AG04449 (cell line): ENCODE measurements at regions of chr21 and their contacts with region 1.

Region 1: GRCh38 chr21:45011911-45012660 is 62.3 kb upstream of the ADARB1 start:
- DNase-seq: peak; percentile 56
- H3K4me3 ChIP-seq: no peak overlapping the region
- CTCF ChIP-seq: peak; percentile 46

Region 2: DNA sequence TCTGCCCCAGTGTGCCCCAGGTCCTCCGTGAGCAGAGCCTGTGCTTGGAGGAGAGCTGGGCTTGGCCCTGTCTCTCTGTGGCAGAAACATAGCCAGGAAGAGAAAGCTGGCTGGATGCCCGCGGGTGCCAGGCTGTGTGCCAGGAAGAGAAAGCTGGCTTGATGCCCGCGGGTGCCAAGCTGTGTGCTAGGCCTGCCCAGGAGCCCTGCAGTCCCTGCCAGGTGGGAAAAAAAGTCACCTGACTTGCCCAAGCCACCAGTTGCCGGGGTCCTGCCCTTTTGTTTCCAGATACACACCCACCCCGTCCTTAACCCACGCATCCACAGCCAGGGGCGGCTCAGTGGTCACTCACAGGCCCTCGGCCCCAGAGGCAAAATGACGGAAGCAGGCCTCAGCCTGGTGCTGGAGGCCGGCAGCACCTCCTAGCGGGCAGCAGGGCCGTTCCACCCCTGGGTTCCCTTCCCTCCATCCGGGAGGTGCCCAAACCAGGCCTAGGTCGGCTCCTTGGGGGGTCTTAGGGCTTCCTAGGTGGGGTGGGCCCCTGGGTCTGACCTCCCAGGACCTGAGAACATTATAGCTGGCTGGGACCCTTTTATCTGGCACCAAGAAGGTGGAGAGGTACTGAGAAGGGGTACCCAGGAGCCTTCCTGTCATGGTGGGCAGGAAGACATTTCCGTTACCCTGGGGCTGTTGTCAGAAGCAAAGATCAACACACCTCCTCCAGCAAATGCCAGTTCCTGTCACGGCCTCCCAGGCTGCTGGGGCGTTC is 100.5 kb before region 1 on chr21:
- CTCF ChIA-PET with region 1: no interaction called
- POLR2A ChIA-PET with region 1: no interaction called
- DNase-seq: no peak
- H3K4me3 ChIP-seq: no peak overlapping the region
- CTCF ChIP-seq: no peak

Region 3: DNA sequence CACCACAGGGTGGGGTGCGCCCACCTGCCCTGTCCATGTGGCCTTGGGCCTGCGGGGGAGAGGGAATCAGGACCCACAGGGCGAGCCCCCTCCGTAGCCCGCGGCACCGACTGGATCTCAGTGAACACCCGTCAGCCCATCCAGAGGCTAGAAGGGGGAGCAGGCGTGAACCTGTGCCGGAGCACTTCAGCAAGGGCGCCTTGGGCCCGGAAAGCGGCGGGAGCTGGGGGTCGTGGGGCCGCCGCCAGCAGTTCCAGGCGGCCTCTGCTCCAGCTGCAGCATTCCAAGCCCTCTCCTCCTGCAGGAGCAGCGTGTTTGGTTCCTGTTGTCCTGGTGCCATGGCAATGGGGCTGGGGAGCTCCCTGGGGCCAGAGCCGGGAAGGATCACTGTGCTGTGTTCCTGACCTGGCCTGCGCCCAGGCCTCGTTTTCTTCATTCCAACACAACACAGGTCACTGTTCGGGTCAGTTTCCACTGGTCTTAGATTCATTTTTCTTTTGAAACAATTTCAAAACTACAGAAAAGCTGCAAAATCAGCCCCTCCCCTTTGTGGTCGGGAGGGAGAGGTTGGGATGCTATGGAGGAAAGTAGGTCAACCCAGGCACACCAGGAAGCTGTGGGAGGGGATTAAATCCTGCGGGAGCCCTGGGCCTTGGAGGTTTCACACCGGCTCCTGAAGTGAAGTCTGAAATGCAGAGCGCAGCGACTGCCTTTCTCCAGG is 53.5 kb before region 1 on chr21:
- CTCF ChIA-PET with region 1: interaction called, 6 read pairs
- POLR2A ChIA-PET with region 1: interaction called, 11 read pairs
- DNase-seq: no peak
- H3K4me3 ChIP-seq: no peak overlapping the region
- CTCF ChIP-seq: no peak

Region 4: DNA sequence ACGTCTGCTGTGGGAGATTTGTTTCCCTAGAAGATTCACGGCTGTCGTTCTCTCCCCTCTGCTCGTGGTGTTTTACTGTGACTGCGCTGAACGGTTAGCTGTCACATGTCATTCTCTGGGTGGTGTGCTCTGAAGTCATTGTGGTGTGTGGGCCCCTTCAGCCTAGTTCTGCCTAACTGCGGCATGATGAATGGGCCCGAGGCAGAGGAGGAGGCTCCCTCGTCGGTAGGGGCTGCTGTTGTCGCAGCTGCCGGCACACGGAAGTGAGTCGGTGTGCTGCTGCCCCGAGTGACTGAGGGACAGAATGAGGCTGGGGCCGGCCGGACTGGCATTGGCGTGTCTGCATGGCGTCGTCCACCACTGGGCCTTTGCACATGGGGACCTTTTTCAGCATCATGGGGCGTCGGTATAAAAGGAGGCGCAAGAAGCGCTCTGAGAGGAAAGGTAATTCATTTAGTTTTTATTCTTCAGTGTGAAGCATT is 140.2 kb after region 1 on chr21:
- CTCF ChIA-PET with region 1: no interaction called
- POLR2A ChIA-PET with region 1: no interaction called
- DNase-seq: no peak
- H3K4me3 ChIP-seq: no peak overlapping the region
- CTCF ChIP-seq: peak; percentile 73